Dorsolateral prefrontal cortex (tissue), 120 donors: ENCODE measurements at regions of chr9 and their contacts with region 1.

Region 1: GRCh38 chr9:131960871-131961495 is 118.7 kb downstream of the MED27 start:
- DNase-seq: peak in 9 of 10 donors; percentile 50 to 84 (median 72)
- H3K4me3 ChIP-seq: peak overlapping the region in 26 of 59 donors; percentile 0 to 43 (median 12)
- H3K27ac ChIP-seq: peak overlapping the region in 58 of 59 donors; percentile 42 to 97 (median 88)
- H3K27me3 ChIP-seq: no peaks in the 10 kb centered on the region
- CTCF ChIP-seq: peak in 3 of 56 donors; percentile 8 to 34 (median 20)

Region 2: DNA sequence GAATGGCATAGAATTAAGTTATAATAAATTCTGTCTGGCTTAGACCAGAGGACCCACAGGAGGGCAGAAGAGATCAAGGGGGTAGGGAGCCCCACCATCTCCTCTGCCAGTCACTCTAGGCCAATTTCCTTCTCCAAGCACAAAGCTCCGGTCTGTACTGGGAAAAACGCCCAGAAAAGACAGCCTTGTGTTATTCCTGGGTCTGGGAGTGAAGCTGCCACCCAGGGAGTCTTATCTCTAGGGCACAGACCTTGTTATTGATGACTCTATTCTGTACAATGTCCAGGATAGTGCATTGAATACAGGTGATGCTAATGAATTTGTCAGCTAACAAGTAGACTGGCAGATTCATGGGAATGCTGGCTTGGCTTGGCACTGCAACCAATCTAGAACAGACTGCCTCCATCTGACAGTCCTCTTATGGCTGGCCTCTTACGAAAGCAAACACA is 58.0 kb after region 1 on chr9:
- intact Hi-C with region 1: loop called in 1 of 2 experiments (anchors 10 kb)
- DNase-seq: peak in 4 of 10 donors; percentile 39 to 59 (median 54)
- H3K4me3 ChIP-seq: no peak overlapping the region
- H3K27ac ChIP-seq: peak overlapping the region in 31 of 59 donors; percentile 0 to 73 (median 36)
- H3K27me3 ChIP-seq: no peaks in the 10 kb centered on the region
- CTCF ChIP-seq: peak in 51 of 56 donors; percentile 11 to 70 (median 44)

Region 3: GRCh38 chr9:132069046-132069898 is 108.3 kb after region 1 on chr9:
- intact Hi-C with region 1: loop called in 1 of 2 experiments (anchors 5 kb)
- DNase-seq: no peak
- H3K4me3 ChIP-seq: peak overlapping the region in 5 of 59 donors; percentile 0 to 35 (median 5)
- H3K27ac ChIP-seq: peak overlapping the region; percentile 27 to 91 (median 83)
- H3K27me3 ChIP-seq: no peaks in the 10 kb centered on the region
- CTCF ChIP-seq: no peak